ENCODE measurements at regions of chr4 and their contacts with region 1.

Region 1: GRCh38 chr4:139030614-139031235 is 15.1 kb downstream of the NOCT start:
- DNase-seq: peak; percentile 70
- ATAC-seq: peak; percentile 39 to 49

Region 2: DNA sequence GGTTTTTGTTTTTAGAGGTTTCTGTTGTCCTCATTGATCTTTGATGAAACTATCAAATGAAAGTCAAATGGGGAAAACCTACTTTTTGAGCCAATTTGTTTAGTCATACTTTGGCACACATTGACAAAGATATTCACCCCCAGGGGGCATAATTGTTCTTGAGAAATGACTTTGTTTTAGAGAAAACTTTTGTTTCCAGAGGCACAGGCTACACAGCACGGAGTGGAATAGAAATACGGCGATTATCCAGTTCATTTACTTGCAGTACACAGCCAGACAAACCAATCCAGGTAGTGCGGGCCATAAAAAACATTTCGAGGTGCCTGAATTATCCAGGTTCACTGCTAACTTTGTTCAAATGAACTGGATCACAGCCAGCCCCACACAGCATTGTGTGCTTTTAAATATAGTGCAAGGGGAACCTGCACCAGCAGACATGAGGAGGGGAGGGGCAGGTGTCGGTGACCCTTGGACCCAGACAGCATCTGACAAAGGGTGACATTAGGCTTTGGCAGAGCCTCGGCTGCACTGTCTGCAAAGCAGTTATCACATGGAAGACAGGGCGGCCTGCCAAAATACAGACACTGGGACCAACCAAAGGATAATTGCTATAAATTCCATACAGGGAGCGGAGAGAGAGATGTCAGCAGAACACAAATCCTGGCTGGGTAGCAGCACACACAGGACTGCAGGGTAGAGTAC is 194.7 kb before region 1 on chr4:
- intact Hi-C with region 1: no loop called
- DNase-seq: peak; percentile 59
- ATAC-seq: peak; percentile 75 to 79

Region 3: DNA sequence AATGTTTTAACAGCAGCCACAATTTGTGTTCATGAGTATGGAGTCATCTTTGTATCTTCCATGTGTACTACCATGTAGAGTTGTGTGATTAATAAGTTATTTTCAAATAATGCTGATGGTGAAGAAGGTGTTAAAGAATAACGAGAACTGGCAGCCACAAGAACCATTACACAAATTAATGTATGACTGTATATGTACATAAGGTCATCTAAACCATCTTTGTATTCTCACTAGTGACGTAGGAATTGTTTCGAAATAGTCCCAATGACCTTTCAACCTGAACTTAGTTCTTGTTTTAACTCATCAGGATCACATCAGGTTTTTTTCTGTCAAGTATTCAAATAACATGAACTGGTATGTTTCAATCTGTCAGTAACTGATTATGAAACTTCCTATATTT is 63.4 kb before region 1 on chr4:
- intact Hi-C with region 1: no loop called
- DNase-seq: no peak
- ATAC-seq: no peak

Region 4: GRCh38 chr4:139083956-139084803 is 53.5 kb after region 1 on chr4:
- intact Hi-C with region 1: loop called (anchors 5 to 10 kb)
- DNase-seq: peak; percentile 92
- ATAC-seq: peak; percentile 79 to 82

Region 5: GRCh38 chr4:139171876-139172691 is 141.4 kb after region 1 on chr4:
- intact Hi-C with region 1: loop called in 1 of 2 experiments (anchors 5 kb)
- DNase-seq: no peak
- ATAC-seq: no peak

Region 6: DNA sequence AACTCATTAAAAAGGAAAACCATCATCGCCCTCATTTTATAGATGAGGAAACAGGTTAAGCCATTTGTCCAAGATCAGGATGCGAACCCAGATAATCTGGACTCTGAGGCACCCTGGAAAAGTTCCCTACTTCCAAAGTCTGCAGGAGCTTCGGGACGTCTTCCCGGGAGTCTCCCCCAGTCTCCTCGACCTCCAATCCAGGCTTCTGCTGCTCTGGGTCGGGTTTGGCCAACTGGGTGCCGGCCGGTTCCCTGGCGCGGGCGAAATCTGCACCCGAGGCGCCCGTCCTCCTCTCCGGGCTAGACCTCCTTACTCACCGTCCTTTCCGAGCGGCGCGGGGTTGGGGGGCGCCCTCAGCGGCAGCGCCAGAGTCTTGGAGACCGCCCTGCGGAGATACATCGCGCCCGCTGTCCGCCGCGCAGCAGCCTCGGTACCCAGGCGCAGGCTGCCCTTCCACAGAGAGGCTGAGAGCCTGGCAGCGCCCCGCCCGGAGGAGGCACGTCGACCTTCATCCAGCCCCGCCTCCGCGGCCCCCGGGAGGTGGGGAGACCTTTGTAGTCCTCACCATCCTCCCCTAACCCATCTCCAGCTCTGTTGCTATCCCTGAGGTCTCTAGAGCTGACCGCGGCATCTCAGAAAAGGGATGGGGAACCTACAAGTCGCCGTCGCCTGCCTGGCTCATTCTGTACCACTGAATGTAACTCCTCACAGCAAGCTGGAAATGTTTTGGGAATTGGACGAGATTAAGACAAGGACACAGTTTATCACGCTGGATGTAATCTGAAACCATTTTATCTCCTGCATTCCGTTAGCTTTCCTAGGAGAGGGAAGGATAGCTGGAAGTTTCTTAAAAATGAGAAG is 249.3 kb after region 1 on chr4 and contains the start of gene MGARP:
- intact Hi-C with region 1: no loop called
- DNase-seq: peak; percentile 45
- ATAC-seq: peak; percentile 79 to 92
- total RNA-seq, gene MGARP: 1.2 to 1.6 TPM

Region 7: GRCh38 chr4:139295206-139295941 is 264.6 kb after region 1 on chr4:
- intact Hi-C with region 1: loop called in 1 of 2 experiments (anchors 5 kb)
- DNase-seq: peak; percentile 98
- ATAC-seq: peak; percentile 97 to 98

Measured in left cardiac atrium (tissue), 4 donors.